Activated CD4-positive, alpha-beta memory T cell treated with anti-CD3 and anti-CD28 coated beads, Interleukin-2, amount 10 ng/mL, durations not matched to agents 7 days and 5 days (primary cell): ENCODE measurements at regions of chr4 and their contacts with region 1.

Region 1: GRCh38 chr4:17614416-17615299 is at the start of gene MED28:
- DNase-seq: peak; percentile 96
- H3K4me3 Mint-ChIP-seq: peak within 1 kb of the TSS; percentile 97
- H3K27ac Mint-ChIP-seq: peak within 1 kb of the TSS; percentile 93
- H3K4me1 Mint-ChIP-seq: peaks cover 52% of the 10 kb centered on the region
- H3K27me3 Mint-ChIP-seq: no peaks in the 10 kb centered on the region
- total RNA-seq, gene MED28: 48.6 to 49.9 TPM

Region 2: DNA sequence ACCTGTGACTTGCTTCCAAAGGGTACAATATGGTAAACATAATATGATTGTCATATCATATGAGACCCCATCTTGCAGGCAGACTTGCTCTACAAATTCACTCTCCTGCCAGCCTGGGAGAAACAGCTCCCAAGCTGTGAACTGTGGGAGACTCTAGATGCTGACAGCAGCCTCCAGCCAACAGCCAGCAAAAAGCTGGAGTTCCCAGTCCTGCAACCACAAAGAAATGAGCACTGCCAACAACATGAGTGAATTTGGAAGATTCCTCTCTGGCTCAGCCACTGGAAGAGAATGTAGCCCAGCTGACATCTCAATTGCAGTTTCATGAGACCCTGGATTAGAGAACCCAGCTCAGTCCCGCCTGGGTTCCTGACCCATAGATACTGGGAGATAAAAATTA is 248.2 kb before region 1 on chr4:
- CTCF ChIA-PET with region 1: no interaction called
- POLR2A ChIA-PET with region 1: no interaction called
- DNase-seq: no peak
- H3K4me3 Mint-ChIP-seq: no peak overlapping the region
- H3K27ac Mint-ChIP-seq: no peak overlapping the region
- H3K4me1 Mint-ChIP-seq: no peaks in the 10 kb centered on the region
- H3K27me3 Mint-ChIP-seq: peaks cover 3% of the 10 kb centered on the region

Region 3: DNA sequence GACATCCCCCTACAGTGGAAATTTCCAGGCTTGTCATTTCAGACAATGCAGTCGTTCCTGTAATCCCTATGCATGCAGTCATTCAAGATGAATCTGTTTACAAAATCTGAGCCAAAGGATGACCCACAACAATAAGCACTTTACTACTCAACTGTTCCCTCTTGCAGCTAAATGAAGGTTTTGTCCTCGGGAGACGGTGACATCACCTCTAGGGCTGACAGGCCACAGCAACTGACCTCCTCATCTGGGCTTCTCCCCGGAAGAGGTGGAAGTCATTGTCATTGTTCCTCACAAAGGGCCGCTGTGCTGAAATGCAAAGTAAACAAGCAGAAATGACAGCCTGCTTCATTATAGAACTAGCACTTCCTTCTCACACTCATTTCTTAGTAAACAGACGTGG is 70.5 kb before region 1 on chr4:
- CTCF ChIA-PET with region 1: interaction called, 12 read pairs
- POLR2A ChIA-PET with region 1: interaction called, 11 read pairs
- DNase-seq: no peak
- H3K4me3 Mint-ChIP-seq: no peak overlapping the region
- H3K27ac Mint-ChIP-seq: no peak overlapping the region
- H3K4me1 Mint-ChIP-seq: peaks cover 4% of the 10 kb centered on the region
- H3K27me3 Mint-ChIP-seq: peaks cover 26% of the 10 kb centered on the region

Region 4: GRCh38 chr4:17554568-17554967 is 60.1 kb before region 1 on chr4:
- CTCF ChIA-PET with region 1: interaction called, 12 read pairs
- POLR2A ChIA-PET with region 1: interaction called, 11 read pairs
- DNase-seq: no peak
- H3K4me3 Mint-ChIP-seq: no peak overlapping the region
- H3K27ac Mint-ChIP-seq: no peak overlapping the region
- H3K4me1 Mint-ChIP-seq: peaks cover 9% of the 10 kb centered on the region
- H3K27me3 Mint-ChIP-seq: peaks cover 15% of the 10 kb centered on the region

Region 5: GRCh38 chr4:17576932-17577665 is 37.6 kb before region 1 on chr4 and contains the start of gene LAP3:
- CTCF ChIA-PET with region 1: interaction called, 13 read pairs
- POLR2A ChIA-PET with region 1: interaction called, 146 read pairs
- DNase-seq: peak; percentile 99
- H3K4me3 Mint-ChIP-seq: peak within 1 kb of the TSS; percentile 97
- H3K27ac Mint-ChIP-seq: peak within 1 kb of the TSS; percentile 99
- H3K4me1 Mint-ChIP-seq: peaks cover 43% of the 10 kb centered on the region
- H3K27me3 Mint-ChIP-seq: no peaks in the 10 kb centered on the region
- total RNA-seq, gene LAP3: 180 to 182 TPM

Region 6: DNA sequence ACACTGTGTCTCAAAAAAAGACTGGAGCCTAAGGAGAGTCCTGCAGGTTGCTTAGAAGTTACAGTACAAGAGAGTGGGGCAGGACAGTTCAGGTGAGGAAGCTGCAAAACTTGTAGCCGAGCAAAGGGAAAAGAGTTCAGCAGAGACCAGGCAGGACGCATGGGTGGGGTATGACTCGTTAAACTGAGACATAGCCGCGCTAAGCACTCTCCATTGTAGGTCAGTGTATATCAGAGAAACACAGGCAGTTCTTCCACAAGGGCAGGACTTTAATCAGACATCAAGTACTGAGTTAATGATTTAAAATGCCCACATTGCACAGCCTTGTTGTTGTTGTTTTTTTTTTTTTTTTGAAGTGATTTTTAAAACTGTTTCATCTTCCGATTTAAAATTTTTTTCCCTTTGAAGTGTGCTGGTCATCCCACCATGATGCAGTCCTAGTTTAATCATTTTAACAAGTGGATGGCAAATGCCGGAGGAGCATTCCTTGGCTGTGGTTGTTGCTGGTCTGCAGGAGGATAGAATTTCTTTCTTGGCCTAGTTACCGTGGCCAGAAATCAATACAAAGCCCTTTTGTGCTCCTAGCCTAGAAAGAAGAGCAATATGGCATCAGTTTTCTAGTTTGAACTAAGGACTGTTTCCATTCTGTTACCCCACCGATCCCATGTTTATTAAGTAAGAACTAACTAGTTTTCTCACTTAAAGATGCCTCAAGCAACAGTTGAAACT is 27.4 kb before region 1 on chr4:
- CTCF ChIA-PET with region 1: no interaction called
- POLR2A ChIA-PET with region 1: interaction called, 14 read pairs
- DNase-seq: no peak
- H3K4me3 Mint-ChIP-seq: no peak overlapping the region
- H3K27ac Mint-ChIP-seq: no peak overlapping the region
- H3K4me1 Mint-ChIP-seq: peaks cover 22% of the 10 kb centered on the region
- H3K27me3 Mint-ChIP-seq: no peaks in the 10 kb centered on the region

Region 7: GRCh38 chr4:17810260-17811077 is 195.8 kb after region 1 on chr4 and contains the starts of genes DCAF16 and NCAPG:
- CTCF ChIA-PET with region 1: interaction called, 9 read pairs
- POLR2A ChIA-PET with region 1: interaction called, 64 read pairs
- DNase-seq: peak; percentile 99
- H3K4me3 Mint-ChIP-seq: peak within 1 kb of the TSS; percentile 91
- H3K27ac Mint-ChIP-seq: peak within 1 kb of the TSS; percentile 96
- H3K4me1 Mint-ChIP-seq: peaks cover 57% of the 10 kb centered on the region
- H3K27me3 Mint-ChIP-seq: no peaks in the 10 kb centered on the region
- total RNA-seq, gene DCAF16: 41.7 to 42.0 TPM
- total RNA-seq, gene NCAPG: 77.7 to 82.3 TPM